ENCODE measurements at regions of chr13 and their contacts with region 1.

Region 1: GRCh38 chr13:37049810-37050209 is 9.7 kb downstream of the SUPT20H start:
- DNase-seq: no peak
- H3K4me3 ChIP-seq: no peak overlapping the region
- H3K27ac ChIP-seq: no peak overlapping the region
- H3K4me1 ChIP-seq: no peaks in the 10 kb centered on the region
- H3K27me3 ChIP-seq: no peaks in the 10 kb centered on the region
- CTCF ChIP-seq: no peak; the same call in 1 of the 2 replicates

Region 2: DNA sequence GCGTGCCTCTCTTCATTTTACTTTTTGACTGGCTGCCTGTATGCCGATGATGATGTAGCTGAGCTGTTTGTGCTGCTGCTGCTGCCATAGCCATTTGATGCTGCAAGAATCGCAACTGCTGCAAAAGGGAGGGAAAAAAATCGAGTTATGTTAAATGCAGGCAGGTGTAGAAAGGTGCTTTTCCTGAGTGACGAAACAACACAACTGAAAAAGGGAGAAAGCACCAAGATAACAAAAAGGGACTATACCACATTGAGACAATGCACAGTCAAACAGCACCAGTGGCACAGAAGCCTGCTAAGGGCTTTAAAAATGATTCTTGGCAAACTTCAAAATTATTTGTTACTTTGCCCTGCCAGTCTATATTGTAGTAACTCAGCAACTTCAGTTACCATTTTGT is 40.1 kb before region 1 on chr13:
- CTCF ChIA-PET with region 1: no interaction called
- POLR2A ChIA-PET with region 1: no interaction called
- intact Hi-C with region 1: loop called (anchors 5 kb)
- DNase-seq: no peak
- H3K4me3 ChIP-seq: no peak overlapping the region
- H3K27ac ChIP-seq: no peak overlapping the region
- H3K4me1 ChIP-seq: no peaks in the 10 kb centered on the region
- H3K27me3 ChIP-seq: no peaks in the 10 kb centered on the region
- CTCF ChIP-seq: no peak

Measured in PC-9 (cell line).